ENCODE measurements at regions of chr2 and their contacts with region 1.

Region 1: DNA sequence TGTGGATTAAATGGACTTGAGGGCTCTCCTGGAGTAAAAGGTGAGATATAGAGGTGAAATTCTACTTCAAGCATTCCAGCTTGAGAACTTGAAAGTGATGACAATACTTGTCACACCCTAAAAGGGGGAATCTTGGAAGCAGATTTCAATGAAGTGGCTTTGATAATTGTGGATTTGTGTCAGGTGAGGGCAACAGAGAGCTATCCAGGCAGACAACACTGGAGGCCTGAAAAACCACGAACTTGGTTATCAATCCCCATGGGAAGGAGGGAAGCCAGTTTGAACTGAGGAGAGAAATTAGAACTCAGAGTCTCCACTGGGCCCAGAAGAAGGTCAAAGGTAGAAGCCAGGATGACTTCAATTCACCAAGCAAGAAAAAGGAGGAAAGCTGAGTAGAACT is 263.9 kb downstream of the FIGN start:
- DNase-seq: peak; percentile 29
- H3K4me3 Mint-ChIP-seq: no peak overlapping the region
- H3K27ac Mint-ChIP-seq: no peak overlapping the region
- H3K4me1 Mint-ChIP-seq: peaks cover 6% of the 10 kb centered on the region
- H3K27me3 Mint-ChIP-seq: no peaks in the 10 kb centered on the region
- CTCF ChIP-seq: peak; percentile 60

Region 2: DNA sequence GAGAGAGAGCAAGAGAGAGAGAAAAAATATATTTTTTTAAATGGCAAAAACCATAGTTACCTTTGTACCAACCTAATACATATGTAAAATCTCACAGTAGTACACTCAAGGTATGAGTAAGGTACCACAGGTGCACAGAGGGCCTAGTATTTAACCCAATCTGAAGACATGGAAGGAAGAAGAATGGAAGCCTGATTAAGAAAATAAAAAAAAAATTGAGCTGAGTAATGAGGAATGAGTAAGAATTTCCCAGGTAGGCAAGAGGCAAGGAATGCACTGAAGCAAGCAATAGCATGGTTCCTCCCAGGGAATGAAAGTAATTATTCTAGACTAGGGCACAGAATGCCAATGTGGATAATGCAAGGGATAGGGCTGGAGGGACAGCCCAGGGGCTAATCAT is 30.3 kb before region 1 on chr2:
- CTCF ChIA-PET with region 1: no interaction called
- POLR2A ChIA-PET with region 1: no interaction called
- intact Hi-C with region 1: no loop called
- DNase-seq: no peak
- H3K4me3 Mint-ChIP-seq: no peak overlapping the region
- H3K27ac Mint-ChIP-seq: no peak overlapping the region
- H3K4me1 Mint-ChIP-seq: no peaks in the 10 kb centered on the region
- H3K27me3 Mint-ChIP-seq: no peaks in the 10 kb centered on the region
- CTCF ChIP-seq: no peak

Region 3: DNA sequence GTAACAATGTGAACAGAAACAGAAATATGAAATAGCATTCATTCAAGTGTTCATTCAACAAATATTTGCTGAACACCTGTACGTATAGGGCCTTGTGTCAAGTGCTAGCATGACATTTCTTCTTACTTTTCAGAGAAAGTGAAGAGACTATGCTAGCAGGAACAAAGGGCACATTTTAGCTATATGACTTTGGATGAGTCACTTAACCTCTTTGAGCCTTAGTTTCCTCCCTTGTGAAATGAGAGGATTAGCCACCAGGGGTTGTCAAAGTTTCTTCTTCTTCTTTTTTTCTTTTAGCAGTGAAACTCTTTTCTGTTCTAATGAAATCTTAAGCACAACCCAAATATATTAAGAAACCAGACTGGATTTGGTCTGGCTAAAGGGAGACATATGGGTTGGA is 210.7 kb after region 1 on chr2:
- CTCF ChIA-PET with region 1: no interaction called
- POLR2A ChIA-PET with region 1: no interaction called
- intact Hi-C with region 1: loop called (anchors 5 kb)
- DNase-seq: peak; percentile 74
- H3K4me3 Mint-ChIP-seq: peak overlapping the region; percentile 17
- H3K27ac Mint-ChIP-seq: peak overlapping the region; percentile 76
- H3K4me1 Mint-ChIP-seq: peaks cover 20% of the 10 kb centered on the region
- H3K27me3 Mint-ChIP-seq: no peaks in the 10 kb centered on the region
- CTCF ChIP-seq: no peak

Measured in MCF 10A (cell line).